Lower leg skin (tissue), 4 donors: ENCODE measurements at regions of chr1 and their contacts with region 1.

Region 1: GRCh38 chr1:53393325-53393792 is 65.5 kb upstream of the LRP8 start:
- DNase-seq: peak; percentile 67 to 96
- H3K4me3 ChIP-seq: no peak overlapping the region
- CTCF ChIP-seq: peak in 1 of 3 donors; percentile 45
- POLR2A ChIP-seq: no peak

Region 2: GRCh38 chr1:53025034-53025768 is 368.2 kb before region 1 on chr1:
- intact Hi-C with region 1: no loop called
- DNase-seq: no peak
- H3K4me3 ChIP-seq: no peak overlapping the region
- CTCF ChIP-seq: no peak
- POLR2A ChIP-seq: no peak

Region 3: DNA sequence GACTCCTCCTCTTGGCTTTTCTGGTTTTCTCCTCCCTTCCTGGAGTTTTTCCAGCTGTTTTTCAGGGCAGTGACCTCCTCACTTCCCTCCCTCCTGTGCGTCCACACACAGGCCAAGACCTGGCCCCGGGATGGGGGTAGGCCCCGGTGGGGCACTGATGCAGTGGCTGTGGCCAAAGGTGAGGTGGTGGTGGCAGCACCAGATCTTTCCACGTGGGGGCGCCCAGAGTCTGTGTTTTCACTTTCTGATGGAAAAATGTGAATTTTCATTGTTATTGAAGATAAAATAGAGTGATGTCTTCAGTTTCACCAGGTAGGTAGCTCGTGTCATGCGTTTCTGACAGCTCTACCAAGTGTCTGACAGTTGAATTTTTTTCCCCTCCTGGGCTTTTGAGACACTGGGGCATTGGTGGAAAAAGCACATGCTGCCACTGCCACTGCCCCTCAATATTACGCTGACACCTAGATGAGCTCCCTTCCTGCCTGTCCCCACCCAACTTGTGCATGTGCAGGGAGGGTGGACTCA is 115.1 kb before region 1 on chr1:
- intact Hi-C with region 1: loop called (anchors 2 kb)
- DNase-seq: peak; percentile 26 to 90
- H3K4me3 ChIP-seq: no peak overlapping the region
- CTCF ChIP-seq: peak in 1 of 3 donors; percentile 69
- POLR2A ChIP-seq: no peak

Region 4: DNA sequence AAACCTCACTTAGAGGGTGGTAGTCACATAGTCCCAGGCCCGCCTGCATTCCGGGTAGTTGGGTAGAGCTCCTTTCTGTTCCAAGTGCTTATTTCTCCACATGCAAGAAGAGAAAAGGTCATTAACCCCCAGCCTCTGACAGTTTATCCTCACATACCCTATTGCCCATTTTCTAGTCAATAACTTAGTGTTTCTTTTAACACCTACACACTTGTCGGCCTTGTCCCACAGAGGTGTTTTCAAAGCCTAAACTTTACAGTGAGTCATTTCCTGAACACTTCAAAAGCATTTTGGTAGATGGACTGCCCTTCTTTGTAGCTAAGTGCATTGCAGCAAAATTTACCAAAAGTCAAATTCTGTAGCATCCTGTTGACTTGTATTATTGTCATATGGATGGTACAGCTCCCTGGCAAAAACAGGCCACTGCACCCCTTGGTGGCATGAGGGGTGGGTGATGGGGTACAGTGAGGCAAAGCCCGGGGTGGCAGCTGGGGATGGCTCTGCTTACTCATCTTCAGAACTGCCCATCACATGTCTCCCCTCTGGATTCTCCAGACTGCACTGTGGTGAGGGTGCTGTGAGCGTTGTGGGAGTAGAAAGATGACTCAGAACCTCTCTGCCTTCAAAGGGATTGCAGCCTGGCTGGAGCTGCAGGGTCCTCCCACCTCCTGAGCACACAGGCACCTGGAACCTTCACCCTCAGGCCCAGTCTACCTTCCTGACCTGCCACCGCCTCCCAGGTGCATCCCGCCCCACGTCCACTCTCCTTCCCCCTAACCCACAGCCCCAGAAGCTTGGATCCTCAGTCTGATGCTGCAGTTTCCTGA is 20.0 kb after region 1 on chr1:
- intact Hi-C with region 1: no loop called
- DNase-seq: peak in 1 of 2 donors; percentile 77
- H3K4me3 ChIP-seq: no peak overlapping the region
- CTCF ChIP-seq: no peak
- POLR2A ChIP-seq: no peak

Region 5: DNA sequence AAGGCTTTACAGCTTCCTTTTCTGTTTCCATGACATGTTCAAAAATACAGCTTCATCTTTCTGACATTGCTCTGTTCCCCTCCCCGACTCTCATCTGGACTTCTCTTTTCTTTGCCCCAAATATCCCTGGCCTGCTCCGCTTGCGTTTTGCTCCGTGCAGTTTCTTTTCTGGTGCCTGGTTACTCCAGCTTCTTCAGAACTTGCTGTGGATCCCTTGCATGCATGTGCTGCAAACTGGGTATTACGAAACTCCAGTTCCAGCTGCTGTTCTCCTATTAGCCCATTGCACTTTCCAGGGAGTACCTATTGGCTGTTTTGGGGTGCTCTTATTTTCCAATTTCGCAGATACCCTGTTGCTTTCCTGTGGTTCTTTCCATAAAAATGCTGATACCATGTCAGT is 454.6 kb after region 1 on chr1:
- intact Hi-C with region 1: no loop called
- DNase-seq: no peak
- H3K4me3 ChIP-seq: no peak overlapping the region
- CTCF ChIP-seq: no peak
- POLR2A ChIP-seq: no peak